Activated naive CD4-positive, alpha-beta T cell treated with anti-CD3 and anti-CD28 coated beads for 36 hours (primary cell): ENCODE measurements at regions of chr6 and their contacts with region 1.

Region 1: DNA sequence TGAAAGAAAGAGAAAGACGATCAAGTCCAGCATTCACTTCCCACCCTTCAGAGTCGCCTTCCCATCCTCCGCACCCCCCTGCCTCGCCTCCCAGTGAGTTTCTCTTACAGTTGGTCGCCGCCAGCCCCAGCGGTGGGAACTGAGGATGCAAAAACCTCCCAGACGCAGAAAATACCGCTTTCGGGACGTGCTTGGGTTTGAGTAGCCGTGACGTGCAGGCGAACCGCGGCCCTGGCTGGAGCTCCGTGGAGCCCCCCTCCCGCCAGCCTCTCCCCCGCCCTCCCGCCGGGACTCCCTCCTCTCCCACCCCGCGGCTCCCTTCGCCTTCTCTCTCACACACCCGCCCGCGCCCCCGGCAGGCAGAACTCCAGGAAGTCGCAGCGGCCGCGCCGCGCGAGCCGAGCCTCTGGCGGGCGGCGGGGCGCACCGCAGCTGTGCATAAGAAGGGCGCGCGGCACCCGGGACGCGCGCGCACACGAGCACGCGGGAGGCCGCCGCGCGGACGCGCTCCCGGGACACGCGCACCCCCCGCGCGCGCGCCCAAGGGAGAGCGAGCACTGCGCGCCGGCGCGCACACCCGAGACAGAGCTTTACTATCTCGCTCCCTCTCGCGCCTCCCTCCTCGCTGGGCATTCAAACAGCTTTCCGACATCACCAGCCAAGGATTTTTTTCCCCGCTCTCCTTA is at the start of gene ADGRB3:
- DNase-seq: peak; percentile 25
- H3K4me3 Mint-ChIP-seq: peak within 1 kb of the TSS; percentile 77
- H3K27ac Mint-ChIP-seq: no peak within 1 kb of the TSS
- H3K4me1 Mint-ChIP-seq: peaks cover 18% of the 10 kb centered on the region
- H3K27me3 Mint-ChIP-seq: peaks cover 52% of the 10 kb centered on the region
- total RNA-seq, gene ADGRB3: not detected

Region 2: GRCh38 chr6:68343901-68344300 is 291.0 kb before region 1 on chr6:
- CTCF ChIA-PET with region 1: interaction called, 3 read pairs
- intact Hi-C with region 1: loop called (anchors 5 kb)
- DNase-seq: peak; percentile 38
- H3K4me3 Mint-ChIP-seq: no peak overlapping the region
- H3K27ac Mint-ChIP-seq: no peak overlapping the region
- H3K4me1 Mint-ChIP-seq: no peaks in the 10 kb centered on the region
- H3K27me3 Mint-ChIP-seq: no peaks in the 10 kb centered on the region

Region 3: GRCh38 chr6:68778356-68779020 is 143.6 kb after region 1 on chr6:
- CTCF ChIA-PET with region 1: interaction called, 3 read pairs
- intact Hi-C with region 1: loop called (anchors 1 kb)
- DNase-seq: peak; percentile 13
- H3K4me3 Mint-ChIP-seq: no peak overlapping the region
- H3K27ac Mint-ChIP-seq: no peak overlapping the region
- H3K4me1 Mint-ChIP-seq: no peaks in the 10 kb centered on the region
- H3K27me3 Mint-ChIP-seq: no peaks in the 10 kb centered on the region

Region 4: DNA sequence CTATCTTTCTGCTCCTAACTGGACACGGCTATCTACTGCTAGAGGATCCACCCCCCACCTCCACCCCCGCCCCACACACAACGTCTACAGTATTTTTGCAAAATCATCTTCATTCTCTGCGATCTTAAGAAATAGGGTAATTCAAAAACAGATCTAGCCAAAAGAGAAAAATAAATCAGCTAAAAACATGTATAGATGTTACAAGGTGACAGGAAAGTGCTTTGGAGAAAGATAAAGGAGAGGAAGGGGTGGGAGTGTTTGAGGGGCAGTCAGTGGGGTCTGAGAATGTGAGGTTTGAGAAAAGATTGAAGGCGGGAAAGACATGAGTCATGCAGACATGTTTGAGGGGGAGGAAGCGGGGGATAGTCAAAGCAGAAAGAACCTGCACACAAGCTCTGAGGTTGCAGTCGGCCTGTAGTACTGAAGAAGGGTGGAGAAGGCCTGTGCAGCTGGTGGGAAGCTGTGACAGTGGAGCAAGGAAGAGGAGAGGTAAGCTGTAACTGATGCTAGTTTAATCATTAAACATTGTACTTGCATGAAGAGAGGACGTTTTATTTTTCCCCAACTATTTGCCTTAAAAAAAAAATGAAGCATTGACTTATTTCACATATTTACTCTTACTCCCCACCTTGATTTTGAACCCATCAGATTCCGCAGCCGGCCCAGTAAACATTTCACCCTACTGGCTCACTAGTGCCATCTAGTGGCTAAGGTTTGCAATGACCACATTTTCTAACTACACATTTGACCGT is 332.9 kb after region 1 on chr6:
- CTCF ChIA-PET with region 1: interaction called, 7 read pairs
- intact Hi-C with region 1: loop called (anchors 1 kb)
- DNase-seq: peak; percentile 68
- H3K4me3 Mint-ChIP-seq: no peak overlapping the region
- H3K27ac Mint-ChIP-seq: no peak overlapping the region
- H3K4me1 Mint-ChIP-seq: peaks cover 7% of the 10 kb centered on the region
- H3K27me3 Mint-ChIP-seq: peaks cover 2% of the 10 kb centered on the region

Region 5: GRCh38 chr6:69487688-69488087 is 852.8 kb after region 1 on chr6:
- CTCF ChIA-PET with region 1: no interaction called
- intact Hi-C with region 1: loop called (anchors 5 kb)
- DNase-seq: no peak
- H3K4me3 Mint-ChIP-seq: no peak overlapping the region
- H3K27ac Mint-ChIP-seq: no peak overlapping the region
- H3K4me1 Mint-ChIP-seq: no peaks in the 10 kb centered on the region
- H3K27me3 Mint-ChIP-seq: peaks cover 2% of the 10 kb centered on the region